ENCODE measurements at regions of chr6 and their contacts with region 1.

Region 1: GRCh38 chr6:121849477-121849876 is 414.0 kb downstream of the GJA1 start:
- DNase-seq: peak in 6 of 9 donors; percentile 5 to 43 (median 36)
- ATAC-seq: peak; percentile 57
- H3K4me3 ChIP-seq: no peak overlapping the region
- H3K4me3 Mint-ChIP-seq: peak overlapping the region in 1 of 10 donors; percentile 20
- H3K27ac ChIP-seq: no peak overlapping the region
- H3K27ac Mint-ChIP-seq: peak overlapping the region in 1 of 9 donors; percentile 72
- H3K4me1 ChIP-seq: no peaks in the 10 kb centered on the region
- H3K4me1 Mint-ChIP-seq: peaks cover 0 to 28% (median 20%) of the 10 kb centered on the region in 7 donors
- H3K27me3 ChIP-seq: no peaks in the 10 kb centered on the region
- H3K27me3 Mint-ChIP-seq: peaks cover 0 to 8% (median 0%) of the 10 kb centered on the region in 5 donors

Region 2: DNA sequence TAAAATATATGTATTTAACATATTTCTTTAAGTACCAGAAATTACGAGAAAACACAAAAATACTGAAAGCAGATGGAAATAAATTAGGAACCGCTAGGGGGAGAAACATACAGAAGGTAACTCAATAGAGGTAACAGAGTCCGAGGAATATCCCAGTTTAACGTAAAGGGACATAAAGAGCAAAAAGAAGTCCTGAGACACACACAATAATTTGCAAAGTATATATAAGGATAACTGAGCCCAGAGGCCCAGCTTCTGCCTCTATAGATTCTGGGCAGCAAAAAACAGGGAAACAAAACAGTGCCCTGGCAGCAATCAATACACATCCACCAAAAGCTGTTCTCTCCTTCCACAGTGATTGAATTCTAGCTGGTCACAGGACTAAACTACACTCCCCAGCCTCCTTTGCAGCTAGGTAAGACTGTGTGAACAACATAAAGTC is 530.3 kb before region 1 on chr6:
- CTCF ChIA-PET with region 1: interaction called, 3 read pairs
- POLR2A ChIA-PET with region 1: no interaction called
- intact Hi-C with region 1: loop called in 1 of 2 experiments (anchors 1 kb)
- DNase-seq: peak in 2 of 9 donors; percentile 4 to 17
- ATAC-seq: no peak
- H3K4me3 ChIP-seq: no peak overlapping the region
- H3K4me3 Mint-ChIP-seq: peak overlapping the region in 4 of 10 donors; percentile 46 to 62 (median 56)
- H3K27ac ChIP-seq: no peak overlapping the region
- H3K27ac Mint-ChIP-seq: no peak overlapping the region
- H3K4me1 ChIP-seq: no peaks in the 10 kb centered on the region
- H3K4me1 Mint-ChIP-seq: peaks cover 0 to 5% (median 0%) of the 10 kb centered on the region in 7 donors
- H3K27me3 ChIP-seq: no peaks in the 10 kb centered on the region
- H3K27me3 Mint-ChIP-seq: no peaks in the 10 kb centered on the region

Region 3: GRCh38 chr6:121334299-121335086 is 515.0 kb before region 1 on chr6 and contains the start of gene TBC1D32:
- CTCF ChIA-PET with region 1: no interaction called
- POLR2A ChIA-PET with region 1: no interaction called
- intact Hi-C with region 1: loop called in 1 of 2 experiments (anchors 5 kb)
- DNase-seq: peak; percentile 84 to 90 (median 89)
- ATAC-seq: peak; percentile 92
- H3K4me3 ChIP-seq: peak within 1 kb of the TSS; percentile 74
- H3K4me3 Mint-ChIP-seq: peak within 1 kb of the TSS; percentile 86 to 99 (median 98)
- H3K27ac ChIP-seq: peak within 1 kb of the TSS; percentile 97
- H3K27ac Mint-ChIP-seq: peak within 1 kb of the TSS; percentile 97 to 100 (median 99)
- H3K4me1 ChIP-seq: peaks cover 4 to 8% of the 10 kb centered on the region in 2 donors
- H3K4me1 Mint-ChIP-seq: peaks cover 16 to 45% (median 35%) of the 10 kb centered on the region in 7 donors
- H3K27me3 ChIP-seq: no peaks in the 10 kb centered on the region
- H3K27me3 Mint-ChIP-seq: peaks cover 0 to 11% (median 0%) of the 10 kb centered on the region in 5 donors
- total RNA-seq, gene TBC1D32: 12.5 to 17.7 (median 15.8) TPM

Region 4: GRCh38 chr6:121354764-121355163 is 494.7 kb before region 1 on chr6:
- CTCF ChIA-PET with region 1: interaction called, 3 read pairs
- POLR2A ChIA-PET with region 1: no interaction called
- intact Hi-C with region 1: loop called in 1 of 2 experiments (anchors 5 kb)
- DNase-seq: no peak
- ATAC-seq: no peak
- H3K4me3 ChIP-seq: no peak overlapping the region
- H3K4me3 Mint-ChIP-seq: no peak overlapping the region
- H3K27ac ChIP-seq: no peak overlapping the region
- H3K27ac Mint-ChIP-seq: no peak overlapping the region
- H3K4me1 ChIP-seq: no peaks in the 10 kb centered on the region
- H3K4me1 Mint-ChIP-seq: no peaks in the 10 kb centered on the region
- H3K27me3 ChIP-seq: no peaks in the 10 kb centered on the region
- H3K27me3 Mint-ChIP-seq: peaks cover 23 to 46% (median 31%) of the 10 kb centered on the region in 5 donors

Region 5: GRCh38 chr6:121430514-121431460 is 418.7 kb before region 1 on chr6:
- CTCF ChIA-PET with region 1: interaction called, 5 read pairs
- POLR2A ChIA-PET with region 1: interaction called, 5 read pairs
- intact Hi-C with region 1: loop called (anchors 1 to 2 kb)
- DNase-seq: no peak
- ATAC-seq: no peak
- H3K4me3 ChIP-seq: no peak overlapping the region
- H3K4me3 Mint-ChIP-seq: no peak overlapping the region
- H3K27ac ChIP-seq: no peak overlapping the region
- H3K27ac Mint-ChIP-seq: peak overlapping the region in 1 of 9 donors; percentile 2
- H3K4me1 ChIP-seq: no peaks in the 10 kb centered on the region
- H3K4me1 Mint-ChIP-seq: peaks cover 0 to 23% (median 12%) of the 10 kb centered on the region in 7 donors
- H3K27me3 ChIP-seq: no peaks in the 10 kb centered on the region
- H3K27me3 Mint-ChIP-seq: peaks cover 0 to 9% (median 0%) of the 10 kb centered on the region in 5 donors

Region 6: GRCh38 chr6:121584586-121585369 is 264.7 kb before region 1 on chr6:
- CTCF ChIA-PET with region 1: no interaction called
- POLR2A ChIA-PET with region 1: no interaction called
- intact Hi-C with region 1: loop called in 1 of 2 experiments (anchors 10 kb)
- DNase-seq: no peak
- ATAC-seq: no peak
- H3K4me3 ChIP-seq: no peak overlapping the region
- H3K4me3 Mint-ChIP-seq: peak overlapping the region in 1 of 10 donors; percentile 30
- H3K27ac ChIP-seq: no peak overlapping the region
- H3K27ac Mint-ChIP-seq: no peak overlapping the region
- H3K4me1 ChIP-seq: no peaks in the 10 kb centered on the region
- H3K4me1 Mint-ChIP-seq: peaks cover 4 to 18% (median 11%) of the 10 kb centered on the region in 7 donors
- H3K27me3 ChIP-seq: no peaks in the 10 kb centered on the region
- H3K27me3 Mint-ChIP-seq: no peaks in the 10 kb centered on the region

Region 7: GRCh38 chr6:121724576-121724975 is 124.9 kb before region 1 on chr6:
- CTCF ChIA-PET with region 1: no interaction called
- POLR2A ChIA-PET with region 1: no interaction called
- intact Hi-C with region 1: no loop called
- DNase-seq: no peak
- ATAC-seq: no peak
- H3K4me3 ChIP-seq: no peak overlapping the region
- H3K4me3 Mint-ChIP-seq: no peak overlapping the region
- H3K27ac ChIP-seq: no peak overlapping the region
- H3K27ac Mint-ChIP-seq: no peak overlapping the region
- H3K4me1 ChIP-seq: no peaks in the 10 kb centered on the region
- H3K4me1 Mint-ChIP-seq: no peaks in the 10 kb centered on the region
- H3K27me3 ChIP-seq: no peaks in the 10 kb centered on the region
- H3K27me3 Mint-ChIP-seq: peaks cover 0 to 2% (median 0%) of the 10 kb centered on the region in 5 donors

Region 8: GRCh38 chr6:121800047-121800446 is 49.4 kb before region 1 on chr6:
- CTCF ChIA-PET with region 1: no interaction called
- POLR2A ChIA-PET with region 1: no interaction called
- intact Hi-C with region 1: no loop called
- DNase-seq: no peak
- ATAC-seq: no peak
- H3K4me3 ChIP-seq: no peak overlapping the region
- H3K4me3 Mint-ChIP-seq: no peak overlapping the region
- H3K27ac ChIP-seq: no peak overlapping the region
- H3K27ac Mint-ChIP-seq: no peak overlapping the region
- H3K4me1 ChIP-seq: no peaks in the 10 kb centered on the region
- H3K4me1 Mint-ChIP-seq: no peaks in the 10 kb centered on the region
- H3K27me3 ChIP-seq: no peaks in the 10 kb centered on the region
- H3K27me3 Mint-ChIP-seq: no peaks in the 10 kb centered on the region

Region 9: GRCh38 chr6:121925024-121925423 is 75.5 kb after region 1 on chr6:
- CTCF ChIA-PET with region 1: no interaction called
- POLR2A ChIA-PET with region 1: no interaction called
- intact Hi-C with region 1: no loop called
- DNase-seq: no peak
- ATAC-seq: no peak
- H3K4me3 ChIP-seq: no peak overlapping the region
- H3K4me3 Mint-ChIP-seq: peak overlapping the region in 2 of 10 donors; percentile 9 to 14
- H3K27ac ChIP-seq: no peak overlapping the region
- H3K27ac Mint-ChIP-seq: peak overlapping the region in 2 of 9 donors; percentile 11 to 51
- H3K4me1 ChIP-seq: peaks cover 0 to 2% of the 10 kb centered on the region in 2 donors
- H3K4me1 Mint-ChIP-seq: peaks cover 3 to 10% (median 7%) of the 10 kb centered on the region in 7 donors
- H3K27me3 ChIP-seq: no peaks in the 10 kb centered on the region
- H3K27me3 Mint-ChIP-seq: peaks cover 0 to 4% (median 0%) of the 10 kb centered on the region in 5 donors